Ovary (tissue), 10 donors: ENCODE measurements at regions of chr5 and their contacts with region 1.

Region 1: DNA sequence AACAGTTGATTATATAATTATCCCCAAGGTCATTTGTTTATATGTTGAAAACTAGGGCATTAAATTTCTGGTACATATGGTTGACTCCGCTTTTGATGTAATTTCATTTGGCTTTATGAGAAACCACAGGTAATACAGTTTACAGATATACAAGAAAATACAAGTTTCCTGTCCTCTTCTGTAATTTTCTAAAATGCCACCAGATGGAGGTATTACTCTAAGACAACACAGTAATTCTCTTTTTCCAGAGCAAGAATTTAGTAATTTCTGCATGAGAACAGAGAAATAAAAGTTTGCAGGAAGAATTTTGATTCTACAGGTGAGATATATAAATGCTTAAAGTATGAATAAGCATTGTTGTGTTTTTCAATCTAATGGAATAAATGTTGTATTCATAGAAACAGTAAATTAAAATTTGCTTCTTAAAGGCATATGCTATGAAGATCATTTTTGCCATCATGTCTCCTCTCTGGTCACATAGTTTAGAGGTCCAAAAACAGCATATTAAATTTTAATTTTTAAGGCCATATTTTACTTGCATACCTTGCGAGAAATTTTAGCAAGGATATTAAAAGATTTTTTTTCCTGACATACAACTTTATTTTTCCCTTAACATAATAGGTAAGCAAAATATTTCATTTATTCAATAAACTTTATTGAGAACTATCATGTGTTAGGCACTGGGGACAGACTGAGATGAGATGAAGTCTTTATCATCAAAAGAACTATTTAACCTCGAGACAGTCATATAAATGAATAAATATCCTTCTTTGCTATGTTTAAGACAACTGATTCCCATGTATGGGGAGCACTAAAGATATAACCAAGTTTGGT is 22.7 kb downstream of the CHD1 start:
- DNase-seq: no peak
- H3K4me3 ChIP-seq: no peak overlapping the region
- H3K27ac ChIP-seq: no peak overlapping the region
- H3K4me1 ChIP-seq: no peaks in the 10 kb centered on the region
- H3K27me3 ChIP-seq: no peaks in the 10 kb centered on the region
- CTCF ChIP-seq: peak in 2 of 3 donors; percentile 46 to 72
- EP300 ChIP-seq: no peak
- POLR2A ChIP-seq: no peak

Region 2: GRCh38 chr5:98961665-98962344 is 55.7 kb after region 1 on chr5:
- intact Hi-C with region 1: no loop called
- DNase-seq: no peak
- H3K4me3 ChIP-seq: no peak overlapping the region
- H3K27ac ChIP-seq: no peak overlapping the region
- H3K4me1 ChIP-seq: no peaks in the 10 kb centered on the region
- H3K27me3 ChIP-seq: no peaks in the 10 kb centered on the region
- CTCF ChIP-seq: no peak
- EP300 ChIP-seq: no peak
- POLR2A ChIP-seq: no peak

Region 3: GRCh38 chr5:99032234-99033013 is 126.3 kb after region 1 on chr5:
- intact Hi-C with region 1: loop called (anchors 5 to 10 kb)
- DNase-seq: peak; percentile 40 to 72 (median 52)
- H3K4me3 ChIP-seq: peak overlapping the region; percentile 1
- H3K27ac ChIP-seq: peak overlapping the region; percentile 41 to 55
- H3K4me1 ChIP-seq: peaks cover 6% of the 10 kb centered on the region
- H3K27me3 ChIP-seq: no peaks in the 10 kb centered on the region
- CTCF ChIP-seq: peak; percentile 19 to 59 (median 57)
- EP300 ChIP-seq: no peak
- POLR2A ChIP-seq: no peak

Region 4: GRCh38 chr5:99119351-99119750 is 213.3 kb after region 1 on chr5:
- intact Hi-C with region 1: no loop called
- DNase-seq: no peak
- H3K4me3 ChIP-seq: no peak overlapping the region
- H3K27ac ChIP-seq: no peak overlapping the region
- H3K4me1 ChIP-seq: no peaks in the 10 kb centered on the region
- H3K27me3 ChIP-seq: no peaks in the 10 kb centered on the region
- CTCF ChIP-seq: no peak
- EP300 ChIP-seq: no peak
- POLR2A ChIP-seq: no peak